ENCODE measurements at regions of chr15 and their contacts with region 1.

Region 1: GRCh38 chr15:98177924-98178592 is 217.6 kb downstream of the ARRDC4 start:
- DNase-seq: peak; percentile 47
- ATAC-seq: peak; percentile 69
- H3K4me3 Mint-ChIP-seq: no peak overlapping the region
- H3K27ac Mint-ChIP-seq: no peak overlapping the region
- H3K4me1 Mint-ChIP-seq: no peaks in the 10 kb centered on the region
- H3K27me3 Mint-ChIP-seq: peaks cover 15% of the 10 kb centered on the region

Region 2: GRCh38 chr15:97903971-97904572 is 274.0 kb before region 1 on chr15:
- CTCF ChIA-PET with region 1: interaction called, 21 read pairs
- POLR2A ChIA-PET with region 1: no interaction called
- DNase-seq: peak; percentile 27
- ATAC-seq: peak; percentile 55
- H3K4me3 Mint-ChIP-seq: no peak overlapping the region
- H3K27ac Mint-ChIP-seq: no peak overlapping the region
- H3K4me1 Mint-ChIP-seq: no peaks in the 10 kb centered on the region
- H3K27me3 Mint-ChIP-seq: peaks cover 15% of the 10 kb centered on the region

Region 3: DNA sequence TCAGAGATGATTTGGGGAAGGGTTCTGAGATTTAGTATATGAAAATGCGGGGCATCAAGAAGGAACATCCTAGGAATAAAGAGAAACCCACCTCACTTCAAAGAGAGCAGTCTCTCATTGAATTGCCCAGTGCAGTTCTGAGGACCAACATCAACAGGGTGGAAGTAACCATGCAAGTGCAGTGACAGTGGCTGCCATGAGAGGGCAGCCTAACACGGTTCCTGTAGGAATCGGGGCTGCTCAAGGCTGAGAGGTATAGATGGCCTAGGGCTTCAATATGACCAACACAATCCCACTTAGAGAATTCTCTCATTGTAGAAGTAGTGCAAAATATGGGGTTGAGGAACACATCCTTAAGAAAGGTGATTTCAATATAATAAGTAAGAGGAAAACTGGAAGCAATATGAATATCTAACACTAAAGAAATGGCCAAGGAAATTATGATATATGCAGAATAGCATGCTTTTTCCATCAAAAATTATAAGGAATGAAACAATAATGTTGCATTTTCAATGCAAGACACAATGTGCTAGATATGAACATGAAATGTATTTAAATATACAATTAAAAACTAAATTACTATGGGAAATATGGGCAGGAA is 268.7 kb before region 1 on chr15:
- CTCF ChIA-PET with region 1: interaction called, 21 read pairs
- POLR2A ChIA-PET with region 1: no interaction called
- DNase-seq: peak; percentile 54
- ATAC-seq: peak; percentile 79
- H3K4me3 Mint-ChIP-seq: no peak overlapping the region
- H3K27ac Mint-ChIP-seq: no peak overlapping the region
- H3K4me1 Mint-ChIP-seq: no peaks in the 10 kb centered on the region
- H3K27me3 Mint-ChIP-seq: peaks cover 2% of the 10 kb centered on the region

Region 4: DNA sequence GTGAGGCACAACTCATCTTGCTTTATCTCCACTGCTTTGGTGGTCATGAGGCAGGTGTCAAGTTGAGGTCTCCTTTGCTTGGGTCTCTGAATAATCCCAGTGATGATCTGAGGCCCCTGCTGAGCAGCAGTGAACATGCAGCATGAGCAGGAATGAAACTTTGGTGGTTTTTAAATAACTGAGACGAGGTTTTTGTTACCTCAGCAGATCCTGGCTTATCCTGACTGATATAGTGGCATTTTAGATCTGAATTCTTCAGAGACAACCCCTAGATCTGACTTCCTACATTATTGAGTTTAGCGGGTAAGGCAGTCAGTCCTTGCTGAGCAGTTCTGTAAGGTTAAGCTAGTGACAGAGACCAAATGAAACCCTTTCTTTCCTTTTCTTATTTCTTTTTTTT is 12.9 kb after region 1 on chr15:
- CTCF ChIA-PET with region 1: no interaction called
- POLR2A ChIA-PET with region 1: no interaction called
- DNase-seq: no peak
- ATAC-seq: no peak
- H3K4me3 Mint-ChIP-seq: no peak overlapping the region
- H3K27ac Mint-ChIP-seq: no peak overlapping the region
- H3K4me1 Mint-ChIP-seq: no peaks in the 10 kb centered on the region
- H3K27me3 Mint-ChIP-seq: peaks cover 2% of the 10 kb centered on the region

Region 5: DNA sequence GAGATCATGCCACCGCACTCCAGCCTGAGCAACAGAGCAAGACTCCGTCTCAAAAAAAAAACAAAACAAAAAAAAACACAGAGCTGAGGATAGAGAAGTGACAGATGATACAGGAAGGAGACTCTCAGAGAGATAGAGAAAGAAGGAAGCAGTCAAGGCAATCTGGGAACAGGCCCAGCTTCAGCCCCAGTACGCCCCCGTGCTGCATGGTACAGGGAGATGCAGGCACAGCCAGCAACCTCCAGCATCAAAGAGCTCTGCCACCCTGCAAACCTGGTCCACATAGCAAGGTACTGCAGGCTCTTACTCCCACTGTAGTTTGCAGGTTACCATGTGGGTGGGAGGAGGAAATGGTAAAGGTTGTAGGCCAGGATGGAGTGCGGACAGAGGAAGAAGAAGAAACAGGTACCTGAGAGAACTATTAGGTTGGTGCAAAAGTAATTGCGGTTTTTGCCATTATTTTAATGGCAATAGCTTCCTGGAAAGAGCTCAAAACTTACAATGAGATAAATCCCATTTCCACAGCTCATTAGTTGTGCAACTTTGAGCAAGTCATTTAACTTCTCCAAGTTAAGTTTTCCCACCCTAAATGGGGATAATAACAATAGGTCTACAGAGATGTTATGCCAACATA is 35.4 kb after region 1 on chr15:
- CTCF ChIA-PET with region 1: no interaction called
- POLR2A ChIA-PET with region 1: no interaction called
- DNase-seq: no peak
- ATAC-seq: no peak
- H3K4me3 Mint-ChIP-seq: no peak overlapping the region
- H3K27ac Mint-ChIP-seq: no peak overlapping the region
- H3K4me1 Mint-ChIP-seq: no peaks in the 10 kb centered on the region
- H3K27me3 Mint-ChIP-seq: no peaks in the 10 kb centered on the region